GM12878 (cell line): ENCODE measurements at regions of chr11 and their contacts with region 1.

Region 1: GRCh38 chr11:61639816-61640443 is 40.3 kb upstream of the DAGLA start:
- DNase-seq: no peak
- ATAC-seq: no peak
- H3K4me3 ChIP-seq: no peak overlapping the region
- H3K27ac ChIP-seq: no peak overlapping the region
- H3K4me1 ChIP-seq: no peaks in the 10 kb centered on the region
- H3K27me3 ChIP-seq: peaks cover 0 to 2% of the 10 kb centered on the region in 2 experiments; a peak in 1 of 4 replicates
- CTCF ChIP-seq: no peak
- EP300 ChIP-seq: no peak
- POLR2A ChIP-seq: no peak
- RAD21 ChIP-seq: no peak

Region 2: DNA sequence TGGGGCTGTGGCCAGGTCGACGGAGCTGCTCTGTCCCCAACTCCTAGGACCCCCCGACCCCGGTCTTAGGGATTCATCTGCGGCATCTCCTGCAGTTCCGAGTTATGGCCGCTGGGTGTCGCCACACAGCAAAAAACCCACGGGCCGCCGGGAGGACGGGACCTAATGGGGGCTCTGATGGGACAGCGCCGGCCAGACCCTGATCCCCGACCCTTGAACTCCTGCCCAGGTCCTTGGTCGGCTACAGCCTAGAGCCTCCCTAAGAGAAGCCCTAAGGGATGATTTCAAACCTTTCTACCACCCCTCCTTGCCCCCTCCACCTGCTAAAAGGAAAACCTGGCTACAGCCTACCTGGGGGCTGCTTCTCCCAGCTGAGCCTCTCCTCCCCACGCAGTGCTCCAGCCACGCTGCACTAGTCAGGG is 162.2 kb before region 1 on chr11:
- CTCF ChIA-PET with region 1: interaction called, 12 read pairs
- POLR2A ChIA-PET with region 1: no interaction called
- RAD21 ChIA-PET with region 1: interaction called, 6 read pairs
- SMC1A ChIA-PET with region 1: interaction called, 3 read pairs
- in situ Hi-C with region 1: loop called (anchors 5 kb)
- intact Hi-C with region 1: loop called (anchors 2 kb)
- DNase-seq: no peak
- ATAC-seq: peak; percentile 72
- H3K4me3 ChIP-seq: no peak overlapping the region
- H3K27ac ChIP-seq: no peak overlapping the region
- H3K4me1 ChIP-seq: no peaks in the 10 kb centered on the region
- H3K27me3 ChIP-seq: no peaks in the 10 kb centered on the region
- CTCF ChIP-seq: peak; percentile 86 to 95 (median 89)
- EP300 ChIP-seq: no peak
- POLR2A ChIP-seq: no peak
- RAD21 ChIP-seq: peak; percentile 82

Region 3: GRCh38 chr11:61532139-61533038 is 107.5 kb before region 1 on chr11:
- CTCF ChIA-PET with region 1: interaction called, 3 read pairs
- POLR2A ChIA-PET with region 1: no interaction called
- RAD21 ChIA-PET with region 1: no interaction called
- SMC1A ChIA-PET with region 1: no interaction called
- in situ Hi-C with region 1: no loop called
- intact Hi-C with region 1: loop called (anchors 10 kb)
- DNase-seq: no peak
- ATAC-seq: peak; percentile 89
- H3K4me3 ChIP-seq: no peak overlapping the region
- H3K27ac ChIP-seq: no peak overlapping the region
- H3K4me1 ChIP-seq: no peaks in the 10 kb centered on the region
- H3K27me3 ChIP-seq: peaks cover 0 to 1% of the 10 kb centered on the region in 2 experiments; a peak in 1 of 4 replicates
- CTCF ChIP-seq: peak; percentile 76 to 95 (median 91)
- EP300 ChIP-seq: no peak
- POLR2A ChIP-seq: no peak
- RAD21 ChIP-seq: peak; percentile 45; the same call in 1 of the 2 replicates